Common myeloid progenitor, CD34-positive (primary cell): ENCODE measurements at regions of chr12 and their contacts with region 1.

Region 1: DNA sequence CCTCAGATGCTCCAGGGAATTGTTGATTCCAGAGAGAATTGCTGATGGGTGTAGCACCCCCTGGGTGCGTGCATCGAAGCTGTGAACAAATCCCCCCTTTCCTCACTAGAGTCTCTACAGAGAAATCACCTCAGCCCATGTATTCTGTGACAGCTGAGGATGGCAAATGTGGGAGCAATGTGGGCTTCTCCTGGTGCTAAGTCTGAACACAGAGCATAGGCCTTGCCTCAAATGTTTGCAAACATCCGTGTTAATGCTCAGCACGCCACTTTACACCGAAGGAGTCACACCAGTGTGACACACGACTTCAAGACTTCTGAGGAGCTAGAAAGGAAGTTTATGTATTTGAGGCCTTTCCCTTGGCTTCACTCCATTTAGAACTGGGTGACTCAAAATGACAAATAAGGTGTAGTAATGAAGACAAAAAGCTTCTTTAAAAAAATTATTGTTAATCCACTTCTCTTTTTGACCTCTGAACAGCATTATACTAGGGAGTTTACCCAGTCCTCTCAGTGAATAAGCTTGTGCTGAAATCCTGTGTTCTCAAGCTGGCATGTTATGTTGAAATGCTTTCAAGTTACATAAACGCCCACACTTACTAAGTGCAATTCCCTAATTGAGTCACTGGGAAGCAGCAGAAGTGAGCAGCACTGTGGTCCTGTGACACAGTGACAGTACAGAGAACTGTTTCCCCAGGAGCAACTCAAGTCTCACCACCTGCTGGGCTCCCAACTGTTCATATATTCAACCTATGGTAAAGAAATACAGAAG is 92.9 kb downstream of the FAR2 start:
- DNase-seq: peak; percentile 72 to 94 (median 93)
- H3K4me3 ChIP-seq: peak overlapping the region in 4 of 7 experiments; percentile 17 to 28 (median 24)
- H3K27ac ChIP-seq: peak overlapping the region; percentile 55 to 67
- H3K4me1 ChIP-seq: peaks cover 28 to 69% (median 42%) of the 10 kb centered on the region in 4 experiments
- H3K27me3 ChIP-seq: no peaks in the 10 kb centered on the region

Region 2: DNA sequence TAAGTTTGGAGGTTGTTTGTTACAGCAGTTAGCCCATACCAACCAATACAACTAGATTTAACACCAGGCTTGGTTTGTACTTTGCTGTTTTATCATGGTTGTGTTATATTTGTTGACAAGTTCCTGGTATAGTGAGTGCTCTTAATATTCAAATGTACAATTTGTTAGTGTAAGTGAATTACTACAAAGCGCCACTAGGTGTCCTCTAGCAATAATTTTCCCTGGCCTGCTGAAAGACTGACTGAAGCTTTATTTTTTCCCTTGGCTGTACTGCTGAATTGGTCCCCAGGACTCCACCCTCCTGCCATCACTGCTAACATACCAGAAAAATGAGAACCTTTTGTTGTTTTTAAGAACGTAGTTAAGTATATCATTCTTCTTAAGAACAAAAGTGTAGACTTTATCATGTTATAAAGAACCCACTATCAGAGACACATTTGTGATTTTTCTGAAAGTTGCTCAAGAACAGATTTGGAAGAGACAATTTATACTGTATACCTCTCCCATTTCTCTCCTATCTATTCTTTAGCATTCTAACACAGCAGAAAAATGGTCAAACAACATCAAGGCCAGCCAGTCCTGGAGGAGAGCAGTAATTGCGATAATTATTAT is 168.3 kb before region 1 on chr12:
- CTCF ChIA-PET with region 1: interaction called, 13 read pairs
- POLR2A ChIA-PET with region 1: interaction called, 3 read pairs
- DNase-seq: peak; percentile 73 to 87 (median 82)
- H3K4me3 ChIP-seq: no peak overlapping the region
- H3K27ac ChIP-seq: no peak overlapping the region
- H3K4me1 ChIP-seq: peaks cover 4 to 17% (median 5%) of the 10 kb centered on the region in 4 experiments
- H3K27me3 ChIP-seq: no peaks in the 10 kb centered on the region

Region 3: GRCh38 chr12:29207120-29207519 is 34.9 kb before region 1 on chr12:
- CTCF ChIA-PET with region 1: interaction called, 5 read pairs
- POLR2A ChIA-PET with region 1: interaction called, 13 read pairs
- DNase-seq: peak; percentile 64 to 78 (median 69)
- H3K4me3 ChIP-seq: peak overlapping the region in 2 of 7 experiments; percentile 25 to 42
- H3K27ac ChIP-seq: peak overlapping the region; percentile 40 to 69
- H3K4me1 ChIP-seq: peaks cover 18 to 57% (median 38%) of the 10 kb centered on the region in 4 experiments
- H3K27me3 ChIP-seq: no peaks in the 10 kb centered on the region

Region 4: GRCh38 chr12:29255042-29255441 is 13.0 kb after region 1 on chr12:
- CTCF ChIA-PET with region 1: interaction called, 24 read pairs
- POLR2A ChIA-PET with region 1: interaction called, 10 read pairs
- DNase-seq: peak; percentile 63 to 85 (median 85)
- H3K4me3 ChIP-seq: no peak overlapping the region
- H3K27ac ChIP-seq: peak overlapping the region in 1 of 2 experiments; percentile 71
- H3K4me1 ChIP-seq: peaks cover 4 to 28% (median 13%) of the 10 kb centered on the region in 4 experiments
- H3K27me3 ChIP-seq: no peaks in the 10 kb centered on the region

Region 5: GRCh38 chr12:29317556-29318363 is 75.8 kb after region 1 on chr12:
- CTCF ChIA-PET with region 1: interaction called, 11 read pairs
- POLR2A ChIA-PET with region 1: interaction called, 5 read pairs
- DNase-seq: peak; percentile 86 to 90 (median 87)
- H3K4me3 ChIP-seq: peak overlapping the region in 3 of 7 experiments; percentile 20 to 65 (median 43)
- H3K27ac ChIP-seq: no peak overlapping the region
- H3K4me1 ChIP-seq: peaks cover 2 to 41% (median 19%) of the 10 kb centered on the region in 4 experiments
- H3K27me3 ChIP-seq: no peaks in the 10 kb centered on the region

Region 6: DNA sequence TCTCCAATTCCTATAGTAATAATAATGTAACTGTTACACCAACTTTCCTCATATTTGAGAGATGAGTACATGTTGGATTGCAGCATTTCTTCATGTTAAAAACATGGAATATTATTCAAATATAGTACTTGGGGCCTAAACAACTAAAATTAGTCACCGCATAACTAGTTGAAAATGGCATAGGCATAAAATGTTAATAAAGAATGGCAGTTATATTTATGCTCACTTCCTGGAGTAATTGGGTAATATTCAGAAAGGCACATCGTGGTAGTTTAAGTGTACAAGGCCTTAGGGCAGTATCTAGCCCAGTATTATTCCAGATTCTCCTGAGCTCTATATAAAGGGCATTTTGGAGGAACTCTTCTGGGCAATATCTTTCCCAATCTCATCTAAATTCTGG is 92.9 kb after region 1 on chr12:
- CTCF ChIA-PET with region 1: no interaction called
- POLR2A ChIA-PET with region 1: no interaction called
- DNase-seq: no peak
- H3K4me3 ChIP-seq: no peak overlapping the region
- H3K27ac ChIP-seq: no peak overlapping the region
- H3K4me1 ChIP-seq: no peaks in the 10 kb centered on the region
- H3K27me3 ChIP-seq: no peaks in the 10 kb centered on the region